Naive thymus-derived CD4-positive, alpha-beta T cell (primary cell): ENCODE measurements at regions of chr15 and their contacts with region 1.

Region 1: DNA sequence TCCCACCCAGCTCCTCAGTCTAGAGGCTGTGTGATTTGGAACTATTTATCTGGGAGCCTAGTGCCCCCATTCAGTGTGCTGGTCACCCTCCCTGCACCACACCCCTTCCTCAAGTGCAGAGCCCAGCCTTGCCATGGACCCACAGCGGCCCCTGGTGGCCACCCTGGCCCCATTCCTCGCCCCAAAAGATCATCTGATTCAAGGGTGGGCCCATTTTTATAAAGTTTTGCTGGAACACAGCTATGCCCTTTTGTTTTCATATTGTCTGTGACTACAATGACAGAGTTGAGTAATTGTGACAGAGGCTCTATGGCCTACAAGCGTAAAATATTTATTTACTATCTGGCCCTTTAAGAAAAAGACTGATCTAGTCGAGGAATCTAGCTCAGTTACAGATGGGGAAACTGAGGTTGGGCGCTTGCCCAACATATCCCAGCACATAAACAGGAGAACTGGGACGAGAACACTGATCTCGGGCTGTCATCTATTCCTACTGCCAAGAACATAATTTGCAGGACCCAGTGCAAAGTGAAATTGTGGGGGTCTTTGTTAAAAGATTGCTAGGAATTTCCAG is 1.8 kb downstream of the FES start:
- DNase-seq: peak; percentile 49 to 85 (median 72)
- ATAC-seq: peak; percentile 79
- H3K4me3 ChIP-seq: no peak overlapping the region
- H3K4me3 Mint-ChIP-seq: peak overlapping the region in 2 of 10 donors; percentile 42 to 69
- H3K27ac ChIP-seq: no peak overlapping the region
- H3K27ac Mint-ChIP-seq: peak overlapping the region in 2 of 9 donors; percentile 59 to 87
- H3K4me1 ChIP-seq: peaks cover 6 to 7% of the 10 kb centered on the region in 2 donors
- H3K4me1 Mint-ChIP-seq: peaks cover 0 to 43% (median 11%) of the 10 kb centered on the region in 7 donors
- H3K27me3 ChIP-seq: no peaks in the 10 kb centered on the region
- H3K27me3 Mint-ChIP-seq: peaks cover 0 to 6% (median 4%) of the 10 kb centered on the region in 5 donors

Region 2: GRCh38 chr15:90291679-90292356 is 594.3 kb before region 1 on chr15:
- CTCF ChIA-PET with region 1: no interaction called
- POLR2A ChIA-PET with region 1: no interaction called
- intact Hi-C with region 1: loop called in 1 of 2 experiments (anchors 2 kb)
- DNase-seq: no peak
- ATAC-seq: no peak
- H3K4me3 ChIP-seq: no peak overlapping the region
- H3K4me3 Mint-ChIP-seq: no peak overlapping the region
- H3K27ac ChIP-seq: no peak overlapping the region
- H3K27ac Mint-ChIP-seq: no peak overlapping the region
- H3K4me1 ChIP-seq: no peaks in the 10 kb centered on the region
- H3K4me1 Mint-ChIP-seq: peaks cover 0 to 19% (median under 1%) of the 10 kb centered on the region in 7 donors
- H3K27me3 ChIP-seq: no peaks in the 10 kb centered on the region
- H3K27me3 Mint-ChIP-seq: peaks cover 0 to 18% (median 4%) of the 10 kb centered on the region in 5 donors

Region 3: GRCh38 chr15:90362936-90363212 is 523.3 kb before region 1 on chr15:
- CTCF ChIA-PET with region 1: interaction called, 4 read pairs
- POLR2A ChIA-PET with region 1: no interaction called
- intact Hi-C with region 1: loop called in 1 of 2 experiments (anchors 2 kb)
- DNase-seq: no peak
- ATAC-seq: no peak
- H3K4me3 ChIP-seq: no peak overlapping the region
- H3K4me3 Mint-ChIP-seq: peak overlapping the region in 1 of 10 donors; percentile 44
- H3K27ac ChIP-seq: no peak overlapping the region
- H3K27ac Mint-ChIP-seq: no peak overlapping the region
- H3K4me1 ChIP-seq: peaks cover 6 to 13% of the 10 kb centered on the region in 2 donors
- H3K4me1 Mint-ChIP-seq: peaks cover 11 to 35% (median 34%) of the 10 kb centered on the region in 7 donors
- H3K27me3 ChIP-seq: no peaks in the 10 kb centered on the region
- H3K27me3 Mint-ChIP-seq: no peaks in the 10 kb centered on the region

Region 4: GRCh38 chr15:90648137-90649070 is 237.7 kb before region 1 on chr15:
- CTCF ChIA-PET with region 1: interaction called, 26 read pairs
- POLR2A ChIA-PET with region 1: no interaction called
- intact Hi-C with region 1: loop called (anchors 1 kb)
- DNase-seq: peak in 8 of 9 donors; percentile 48 to 69 (median 58)
- ATAC-seq: peak; percentile 83
- H3K4me3 ChIP-seq: no peak overlapping the region
- H3K4me3 Mint-ChIP-seq: peak overlapping the region; percentile 29 to 83 (median 68)
- H3K27ac ChIP-seq: no peak overlapping the region
- H3K27ac Mint-ChIP-seq: peak overlapping the region in 6 of 9 donors; percentile 31 to 95 (median 47)
- H3K4me1 ChIP-seq: peaks cover 9 to 15% of the 10 kb centered on the region in 2 donors
- H3K4me1 Mint-ChIP-seq: peaks cover 27 to 54% (median 37%) of the 10 kb centered on the region in 7 donors
- H3K27me3 ChIP-seq: no peaks in the 10 kb centered on the region
- H3K27me3 Mint-ChIP-seq: peaks cover 0 to 4% (median 0%) of the 10 kb centered on the region in 5 donors

Region 5: DNA sequence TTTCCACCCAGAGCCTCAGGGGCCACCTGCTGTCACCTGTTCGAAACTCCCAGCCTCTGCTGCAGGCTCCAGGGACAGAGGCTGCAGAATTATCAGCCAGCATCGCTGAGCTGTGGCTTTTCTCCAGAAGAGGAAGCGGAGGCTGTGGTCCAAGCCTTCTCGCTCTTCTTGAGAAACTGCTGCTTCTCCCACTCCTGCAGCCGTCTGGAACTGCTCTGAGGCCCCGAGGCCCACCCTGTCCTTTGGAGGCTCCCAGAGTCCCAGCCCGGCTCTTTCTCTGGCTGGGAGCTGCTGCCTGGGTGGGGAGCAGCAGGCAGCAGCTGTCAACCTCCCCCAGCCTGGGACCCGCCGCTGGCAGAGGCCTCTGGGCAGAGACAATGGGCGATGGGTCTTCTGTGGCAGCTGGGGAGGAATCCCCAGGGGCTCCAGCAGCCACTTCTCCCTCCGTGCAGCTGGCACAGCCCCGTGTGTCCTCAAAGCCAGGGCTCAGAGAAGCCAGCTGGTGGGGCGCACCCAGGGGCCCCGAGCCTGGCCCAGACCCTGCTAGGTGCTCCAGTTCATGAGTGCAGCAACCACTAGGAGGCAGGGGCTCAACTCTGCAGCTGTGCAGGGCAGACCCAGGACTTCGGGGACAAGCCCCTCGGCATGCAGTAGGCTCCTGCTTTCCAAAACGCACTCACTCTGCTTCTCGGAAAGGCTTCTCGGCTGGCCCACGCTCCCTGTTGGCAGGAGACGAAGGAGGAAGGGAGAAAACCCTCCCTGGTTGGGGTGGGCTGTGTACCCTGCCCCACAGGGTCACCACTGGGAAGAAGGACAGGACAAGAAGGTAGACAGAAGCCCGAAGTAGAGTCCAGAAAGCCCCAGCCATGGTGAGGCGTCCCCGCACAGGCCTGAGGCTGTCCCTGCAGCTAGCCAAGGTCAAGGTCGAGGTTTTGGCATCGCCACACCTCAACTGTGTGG is 67.6 kb before region 1 on chr15:
- CTCF ChIA-PET with region 1: no interaction called
- POLR2A ChIA-PET with region 1: no interaction called
- intact Hi-C with region 1: loop called (anchors 1 to 5 kb)
- DNase-seq: peak in 2 of 9 donors; percentile 13 to 21
- ATAC-seq: peak; percentile 68
- H3K4me3 ChIP-seq: no peak overlapping the region
- H3K4me3 Mint-ChIP-seq: peak overlapping the region in 3 of 10 donors; percentile 29 to 79 (median 50)
- H3K27ac ChIP-seq: no peak overlapping the region
- H3K27ac Mint-ChIP-seq: peak overlapping the region in 5 of 9 donors; percentile 31 to 94 (median 55)
- H3K4me1 ChIP-seq: peaks cover 0 to 12% of the 10 kb centered on the region in 2 donors
- H3K4me1 Mint-ChIP-seq: peaks cover 0 to 76% (median 10%) of the 10 kb centered on the region in 7 donors
- H3K27me3 ChIP-seq: no peaks in the 10 kb centered on the region
- H3K27me3 Mint-ChIP-seq: no peaks in the 10 kb centered on the region

Region 6: GRCh38 chr15:90902040-90902839 is 16.1 kb after region 1 on chr15:
- CTCF ChIA-PET with region 1: interaction called, 12 read pairs
- POLR2A ChIA-PET with region 1: interaction called, 4 read pairs
- intact Hi-C with region 1: no loop called
- DNase-seq: peak; percentile 60 to 81 (median 73)
- ATAC-seq: peak; percentile 84
- H3K4me3 ChIP-seq: peak overlapping the region; percentile 82
- H3K4me3 Mint-ChIP-seq: peak overlapping the region; percentile 85 to 96 (median 90)
- H3K27ac ChIP-seq: peak overlapping the region; percentile 72
- H3K27ac Mint-ChIP-seq: peak overlapping the region; percentile 81 to 95 (median 90)
- H3K4me1 ChIP-seq: peaks cover 12 to 17% of the 10 kb centered on the region in 2 donors
- H3K4me1 Mint-ChIP-seq: peaks cover 11 to 37% (median 34%) of the 10 kb centered on the region in 7 donors
- H3K27me3 ChIP-seq: no peaks in the 10 kb centered on the region
- H3K27me3 Mint-ChIP-seq: no peaks in the 10 kb centered on the region

Region 7: GRCh38 chr15:91909574-91909973 is 1023.4 kb after region 1 on chr15:
- CTCF ChIA-PET with region 1: no interaction called
- POLR2A ChIA-PET with region 1: no interaction called
- intact Hi-C with region 1: no loop called
- DNase-seq: no peak
- ATAC-seq: no peak
- H3K4me3 ChIP-seq: no peak overlapping the region
- H3K4me3 Mint-ChIP-seq: no peak overlapping the region
- H3K27ac ChIP-seq: no peak overlapping the region
- H3K27ac Mint-ChIP-seq: peak overlapping the region in 2 of 9 donors; percentile 22 to 33
- H3K4me1 ChIP-seq: peaks cover 0 to 4% of the 10 kb centered on the region in 2 donors
- H3K4me1 Mint-ChIP-seq: peaks cover 0 to 50% (median 33%) of the 10 kb centered on the region in 7 donors
- H3K27me3 ChIP-seq: no peaks in the 10 kb centered on the region
- H3K27me3 Mint-ChIP-seq: no peaks in the 10 kb centered on the region